ENCODE measurements at regions of chr6 and their contacts with region 1.

Region 1: DNA sequence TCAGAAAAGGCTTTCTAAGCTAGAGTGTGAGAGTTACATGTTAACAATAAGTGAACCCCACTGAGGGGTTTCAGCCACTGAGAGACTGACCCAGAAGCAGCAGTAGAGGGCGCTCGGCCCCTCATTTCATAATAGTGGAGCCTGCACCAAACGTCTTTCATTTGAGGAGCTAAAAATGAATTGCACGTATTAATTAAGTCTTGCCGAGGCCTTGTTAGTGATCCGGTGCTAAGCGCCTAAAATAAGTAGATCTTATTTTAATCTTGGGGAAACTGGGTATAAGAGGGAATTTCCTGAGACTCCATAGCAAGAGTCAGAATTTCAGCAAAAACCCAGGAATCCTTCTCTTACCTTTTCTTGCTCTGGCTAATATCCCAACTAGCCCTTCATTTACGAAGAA is 209.7 kb downstream of the FARS2 start:
- DNase-seq: peak; percentile 46
- ATAC-seq: peak; percentile 94
- H3K4me3 ChIP-seq: no peak overlapping the region
- H3K27ac ChIP-seq: no peak overlapping the region
- H3K4me1 ChIP-seq: no peaks in the 10 kb centered on the region
- H3K27me3 ChIP-seq: no peaks in the 10 kb centered on the region
- CTCF ChIP-seq: peak; percentile 92

Region 2: DNA sequence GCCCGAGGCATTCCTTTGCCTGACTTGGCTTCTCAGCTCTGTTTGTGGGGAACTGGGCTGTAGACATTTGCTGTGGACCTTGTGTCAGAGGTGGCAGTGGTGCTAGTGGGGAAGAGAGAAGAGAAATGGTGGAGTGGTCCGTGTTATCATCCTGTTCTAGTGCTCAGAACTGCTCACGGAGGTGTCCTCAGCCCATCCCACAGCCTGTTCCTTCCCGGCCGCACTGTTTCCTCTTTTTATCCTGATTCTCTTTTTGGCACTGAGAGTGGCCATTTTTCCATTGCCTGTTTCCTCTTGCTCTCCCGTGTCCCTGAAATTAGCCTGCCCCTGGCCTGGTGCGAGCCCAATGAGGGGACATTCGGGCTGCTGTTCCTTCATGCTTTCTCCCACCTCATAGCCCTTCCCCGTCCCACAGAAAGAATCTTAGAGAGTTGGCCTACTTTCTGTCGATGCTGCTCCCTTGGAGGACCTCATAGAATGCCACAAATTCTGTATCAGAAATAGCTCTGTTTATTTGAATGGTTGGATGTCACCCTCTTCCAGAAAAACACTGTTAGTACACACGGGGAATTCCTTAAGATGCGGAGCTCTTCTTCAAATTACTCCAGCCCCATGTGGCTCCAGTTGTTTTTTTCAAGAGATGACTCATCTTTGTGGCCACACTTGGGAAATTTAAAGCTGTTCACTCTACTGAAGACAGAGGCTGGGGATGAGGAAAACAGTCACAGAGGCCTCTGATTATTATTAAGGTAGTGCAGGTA is 183.7 kb before region 1 on chr6:
- CTCF ChIA-PET with region 1: no interaction called
- POLR2A ChIA-PET with region 1: no interaction called
- in situ Hi-C with region 1: no loop called
- intact Hi-C with region 1: no loop called
- DNase-seq: no peak
- ATAC-seq: no peak
- H3K4me3 ChIP-seq: no peak overlapping the region
- H3K27ac ChIP-seq: no peak overlapping the region
- H3K4me1 ChIP-seq: no peaks in the 10 kb centered on the region
- H3K27me3 ChIP-seq: no peaks in the 10 kb centered on the region
- CTCF ChIP-seq: no peak

Region 3: DNA sequence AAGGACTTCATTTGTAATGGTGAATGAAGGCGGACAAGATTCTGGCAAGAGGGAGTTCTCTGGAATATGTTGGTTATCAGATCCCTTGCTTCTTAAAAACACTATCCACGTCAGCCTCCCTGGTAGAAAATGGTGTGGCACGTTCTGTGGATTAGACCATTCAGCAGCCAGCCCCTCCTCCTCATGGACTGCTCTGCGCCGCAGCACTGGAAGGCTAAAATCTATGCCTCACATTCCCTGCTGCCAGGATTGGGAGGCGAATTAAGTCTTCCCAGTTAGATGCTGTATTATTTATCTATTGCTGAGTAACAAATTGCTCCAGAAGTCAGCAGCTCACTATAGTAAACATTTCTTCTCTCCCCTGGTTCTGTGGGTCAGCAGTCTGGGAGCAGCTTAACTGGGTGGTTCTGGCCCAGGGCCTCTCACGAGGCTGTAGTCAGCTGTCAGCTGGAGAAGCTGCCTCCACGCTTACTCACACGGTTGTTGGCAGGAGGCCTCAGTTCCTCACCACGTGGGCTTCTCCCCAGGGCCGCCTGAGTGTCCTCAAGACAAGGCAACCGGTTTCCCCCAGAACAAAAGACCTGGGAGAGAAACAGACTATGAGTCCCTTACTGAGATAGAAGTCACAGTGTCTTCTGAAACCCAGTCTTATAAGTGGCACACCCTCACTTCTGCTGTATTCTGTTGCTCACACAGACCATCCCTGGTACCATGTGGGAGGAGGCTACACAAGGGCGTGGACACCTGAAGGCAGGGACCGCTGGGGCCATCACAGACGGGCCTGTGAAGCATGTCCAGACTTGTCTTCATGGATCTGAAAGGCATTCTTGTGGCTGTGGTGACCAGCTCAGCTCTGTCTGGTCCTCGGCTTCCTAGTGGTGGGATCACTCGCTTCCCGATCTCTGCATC is 434.6 kb after region 1 on chr6:
- CTCF ChIA-PET with region 1: no interaction called
- POLR2A ChIA-PET with region 1: no interaction called
- in situ Hi-C with region 1: no loop called
- intact Hi-C with region 1: no loop called
- DNase-seq: no peak
- ATAC-seq: 0 out of 2 replicates have a peak, but pooled peaks have one; percentile 30
- H3K4me3 ChIP-seq: no peak overlapping the region
- H3K27ac ChIP-seq: no peak overlapping the region
- H3K4me1 ChIP-seq: no peaks in the 10 kb centered on the region
- H3K27me3 ChIP-seq: peaks cover 2% of the 10 kb centered on the region; the same call in 1 of the 2 replicates
- CTCF ChIP-seq: no peak

Region 4: DNA sequence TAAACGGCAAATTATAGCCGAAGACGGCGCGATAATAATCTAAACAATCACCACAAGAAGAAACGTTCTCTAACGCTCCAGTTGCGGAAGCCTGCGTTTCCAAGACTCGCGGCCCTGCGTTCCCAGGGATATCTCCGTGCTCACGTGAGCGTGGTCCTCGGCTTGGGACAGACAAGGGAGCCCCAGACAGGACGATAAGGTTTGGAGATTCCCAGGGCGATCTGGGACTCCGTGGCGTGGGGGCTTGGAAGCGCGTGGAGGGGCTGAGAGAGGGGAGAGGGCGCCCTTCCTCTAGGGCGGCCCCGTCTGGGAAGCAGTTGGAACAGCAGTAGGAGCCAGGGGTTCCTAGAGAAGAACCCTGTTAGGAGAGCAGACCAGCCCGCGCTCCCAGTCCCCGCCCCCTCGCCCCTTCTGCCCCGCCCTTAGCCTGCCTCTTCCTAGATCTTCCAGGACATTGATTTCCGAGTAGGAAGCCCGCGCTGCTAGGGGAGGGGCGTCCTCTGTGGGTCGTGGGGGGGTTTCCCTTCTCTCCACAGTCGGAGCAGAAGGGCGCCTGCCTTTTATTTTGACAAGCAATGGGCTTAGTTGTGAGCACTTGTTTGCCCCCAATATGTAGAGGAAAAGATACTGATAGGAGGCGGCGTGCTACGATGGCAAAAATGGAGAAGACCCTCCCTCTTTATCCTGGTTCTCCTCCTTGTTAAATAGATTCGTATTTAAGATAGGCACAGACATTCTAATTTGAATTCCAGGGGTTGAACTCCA is 525.1 kb after region 1 on chr6:
- CTCF ChIA-PET with region 1: interaction called, 4 read pairs
- POLR2A ChIA-PET with region 1: no interaction called
- in situ Hi-C with region 1: no loop called
- intact Hi-C with region 1: loop called (anchors 10 kb)
- DNase-seq: no peak
- ATAC-seq: peak; percentile 90
- H3K4me3 ChIP-seq: peak overlapping the region; percentile 78 to 92
- H3K27ac ChIP-seq: peak overlapping the region; percentile 48; the same call in 1 of the 2 replicates
- H3K4me1 ChIP-seq: peaks cover 10% of the 10 kb centered on the region
- H3K27me3 ChIP-seq: peaks cover 7% of the 10 kb centered on the region; the same call in 1 of the 2 replicates
- CTCF ChIP-seq: peak; percentile 70